B cell (primary cell): ENCODE measurements at regions of chr2 and their contacts with region 1.

Region 1: GRCh38 chr2:195559431-195559914 is 97.6 kb upstream of the SLC39A10 start:
- DNase-seq: peak; percentile 83
- ATAC-seq: peak; percentile 66
- H3K4me3 ChIP-seq: peak overlapping the region in 1 of 5 experiments; percentile 37
- H3K4me3 Mint-ChIP-seq: peak overlapping the region; percentile 74
- H3K27ac ChIP-seq: peak overlapping the region; percentile 92 to 94
- H3K27ac Mint-ChIP-seq: peak overlapping the region; percentile 98
- H3K4me1 ChIP-seq: peaks cover 54 to 73% of the 10 kb centered on the region in 2 donors
- H3K4me1 Mint-ChIP-seq: peaks cover 58% of the 10 kb centered on the region
- H3K27me3 ChIP-seq: no peaks in the 10 kb centered on the region
- H3K27me3 Mint-ChIP-seq: no peaks in the 10 kb centered on the region
- CTCF ChIP-seq: no peak

Region 2: DNA sequence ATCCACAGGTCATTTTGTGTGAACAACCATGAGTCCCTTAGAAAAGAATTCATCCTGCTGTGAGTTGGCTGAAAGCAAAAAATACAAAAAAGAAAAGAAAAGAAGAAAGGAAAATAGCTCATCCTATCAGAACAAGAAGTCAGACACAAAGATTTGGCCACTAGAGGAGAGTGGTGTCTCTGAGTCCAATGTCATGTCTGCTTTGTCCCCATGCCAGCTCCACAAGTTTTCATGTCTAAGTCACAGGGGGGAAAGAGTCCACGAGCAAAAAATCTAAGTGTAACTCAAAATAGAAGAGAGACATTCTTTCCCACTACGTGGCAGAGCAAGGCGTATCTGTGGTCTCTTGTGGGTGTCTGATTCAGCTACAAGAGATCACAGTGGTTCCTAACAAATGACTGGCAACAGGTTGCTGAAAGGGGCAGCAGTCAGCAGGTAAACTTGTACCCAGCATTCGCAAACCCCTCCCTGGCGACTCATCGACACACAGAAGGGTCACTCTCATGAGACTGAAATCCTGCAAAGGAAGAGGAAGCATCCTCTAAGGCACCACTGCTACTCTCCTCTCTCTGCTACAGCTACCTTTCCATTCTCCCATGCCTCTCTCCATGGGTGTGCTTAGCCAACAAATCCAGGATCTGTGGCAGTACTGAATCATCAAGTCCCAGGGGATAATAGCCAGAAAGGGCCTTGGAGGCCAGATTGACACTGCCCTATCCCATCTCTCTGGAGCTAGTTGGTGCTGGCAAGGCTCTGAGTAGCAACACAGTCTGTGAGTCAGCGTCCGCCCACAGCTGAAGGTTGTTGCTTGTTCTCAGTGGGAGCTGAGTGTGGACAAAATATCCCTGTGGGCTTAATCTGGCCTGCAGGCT is 25.5 kb before region 1 on chr2:
- CTCF ChIA-PET with region 1: interaction called, 71 read pairs
- POLR2A ChIA-PET with region 1: interaction called, 23 read pairs
- intact Hi-C with region 1: loop called (anchors 1 kb)
- DNase-seq: peak; percentile 31
- ATAC-seq: peak; percentile 60
- H3K4me3 ChIP-seq: peak overlapping the region in 1 of 5 experiments; percentile 62
- H3K4me3 Mint-ChIP-seq: peak overlapping the region; percentile 83
- H3K27ac ChIP-seq: peak overlapping the region; percentile 62 to 83
- H3K27ac Mint-ChIP-seq: peak overlapping the region; percentile 92
- H3K4me1 ChIP-seq: peaks cover 57 to 58% of the 10 kb centered on the region in 2 donors
- H3K4me1 Mint-ChIP-seq: peaks cover 65% of the 10 kb centered on the region
- H3K27me3 ChIP-seq: no peaks in the 10 kb centered on the region
- H3K27me3 Mint-ChIP-seq: no peaks in the 10 kb centered on the region
- CTCF ChIP-seq: no peak

Region 3: GRCh38 chr2:195586062-195586714 is 26.7 kb after region 1 on chr2:
- CTCF ChIA-PET with region 1: interaction called, 3 read pairs
- POLR2A ChIA-PET with region 1: interaction called, 10 read pairs
- intact Hi-C with region 1: no loop called
- DNase-seq: no peak
- ATAC-seq: no peak
- H3K4me3 ChIP-seq: no peak overlapping the region
- H3K4me3 Mint-ChIP-seq: no peak overlapping the region
- H3K27ac ChIP-seq: no peak overlapping the region
- H3K27ac Mint-ChIP-seq: peak overlapping the region; percentile 26
- H3K4me1 ChIP-seq: no peaks in the 10 kb centered on the region
- H3K4me1 Mint-ChIP-seq: no peaks in the 10 kb centered on the region
- H3K27me3 ChIP-seq: no peaks in the 10 kb centered on the region
- H3K27me3 Mint-ChIP-seq: no peaks in the 10 kb centered on the region
- CTCF ChIP-seq: no peak

Region 4: DNA sequence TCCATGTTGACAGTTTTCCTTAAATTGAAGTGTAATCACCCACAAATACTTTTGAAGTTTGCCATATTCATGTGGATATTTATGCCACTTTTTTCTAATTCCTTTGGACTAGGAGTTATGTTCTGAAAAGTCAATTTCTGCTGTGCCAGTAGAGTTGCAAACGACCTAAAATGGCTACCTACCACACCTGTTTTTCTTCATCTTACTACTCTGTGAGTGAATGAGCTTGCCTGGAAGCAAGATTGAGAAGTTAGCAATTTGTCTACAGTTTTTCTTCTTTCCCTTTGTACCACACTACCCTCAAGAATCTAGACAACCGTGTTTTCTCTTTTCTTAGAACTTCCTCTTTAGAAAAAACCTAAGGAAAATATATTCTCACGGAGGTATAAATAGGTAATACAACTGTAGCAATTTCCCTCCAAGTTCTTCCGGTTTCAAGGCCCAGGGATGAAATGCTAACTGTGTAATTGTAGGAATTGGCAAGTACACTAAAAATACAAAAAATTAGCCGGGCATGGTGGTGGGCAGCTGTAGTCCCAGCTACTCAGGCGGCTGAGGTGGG is 90.2 kb after region 1 on chr2:
- CTCF ChIA-PET with region 1: interaction called, 6 read pairs
- POLR2A ChIA-PET with region 1: interaction called, 23 read pairs
- intact Hi-C with region 1: loop called (anchors 1 kb)
- DNase-seq: peak; percentile 76
- ATAC-seq: peak; percentile 18
- H3K4me3 ChIP-seq: peak overlapping the region; percentile 11 to 48 (median 38)
- H3K4me3 Mint-ChIP-seq: peak overlapping the region; percentile 86
- H3K27ac ChIP-seq: peak overlapping the region; percentile 93 to 95
- H3K27ac Mint-ChIP-seq: peak overlapping the region; percentile 94
- H3K4me1 ChIP-seq: peaks cover 66 to 67% of the 10 kb centered on the region in 2 donors
- H3K4me1 Mint-ChIP-seq: peaks cover 67% of the 10 kb centered on the region
- H3K27me3 ChIP-seq: no peaks in the 10 kb centered on the region
- H3K27me3 Mint-ChIP-seq: no peaks in the 10 kb centered on the region
- CTCF ChIP-seq: no peak